Activated B cell treated with CpG ODN at 0.5 μM for 24 hours (primary cell): ENCODE measurements at regions of chr3 and their contacts with region 1.

Region 1: GRCh38 chr3:32238453-32239306 is at the start of gene CMTM8:
- DNase-seq: peak; percentile 45
- ATAC-seq: peak; percentile 83
- H3K4me3 Mint-ChIP-seq: peak within 1 kb of the TSS; percentile 81
- H3K27ac Mint-ChIP-seq: no peak within 1 kb of the TSS
- H3K4me1 Mint-ChIP-seq: peaks cover 21% of the 10 kb centered on the region
- H3K27me3 Mint-ChIP-seq: peaks cover 22% of the 10 kb centered on the region
- CTCF ChIP-seq: no peak
- total RNA-seq, gene CMTM8: 0.24 TPM in 1 of 2 replicates, not detected in the other

Region 2: DNA sequence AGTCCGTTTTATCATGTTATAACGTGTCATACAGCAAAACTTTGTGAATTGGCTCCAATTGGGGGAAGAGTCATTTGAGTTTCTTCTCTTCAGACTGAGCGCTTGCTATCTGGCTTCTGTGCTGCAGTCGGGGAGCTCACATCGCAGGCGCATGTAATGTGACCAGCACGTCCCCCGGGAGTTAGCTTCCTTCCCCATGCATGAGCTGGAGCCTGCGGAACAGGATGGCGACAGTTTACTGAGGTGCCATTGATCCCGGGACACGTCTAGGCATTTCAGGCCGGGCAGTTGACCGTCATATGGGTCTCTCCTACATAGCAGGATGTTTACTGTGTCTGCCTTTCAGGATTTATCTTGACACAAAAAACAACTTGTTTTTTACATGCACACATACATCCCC is 44.6 kb after region 1 on chr3:
- CTCF ChIA-PET with region 1: interaction called, 4 read pairs
- POLR2A ChIA-PET with region 1: no interaction called
- intact Hi-C with region 1: loop called (anchors 5 kb)
- DNase-seq: no peak
- ATAC-seq: peak; percentile 91
- H3K4me3 Mint-ChIP-seq: no peak overlapping the region
- H3K27ac Mint-ChIP-seq: no peak overlapping the region
- H3K4me1 Mint-ChIP-seq: peaks cover 27% of the 10 kb centered on the region
- H3K27me3 Mint-ChIP-seq: peaks cover 3% of the 10 kb centered on the region
- CTCF ChIP-seq: no peak